CD4-positive, alpha-beta memory T cell (primary cell): ENCODE measurements at regions of chrX and their contacts with region 1.

Region 1: GRCh38 chrX:119753571-119754257 is 4.7 kb upstream of the SOWAHD start:
- DNase-seq: peak; percentile 75 to 87 (median 84)
- H3K4me3 ChIP-seq: no peak overlapping the region
- H3K4me3 Mint-ChIP-seq: peak overlapping the region in 7 of 8 donors; percentile 58 to 81 (median 76)
- H3K27ac ChIP-seq: peak overlapping the region; percentile 67
- H3K27ac Mint-ChIP-seq: peak overlapping the region; percentile 93 to 99 (median 96)
- H3K4me1 ChIP-seq: peaks cover 48% of the 10 kb centered on the region
- H3K4me1 Mint-ChIP-seq: peaks cover 22 to 49% (median 38%) of the 10 kb centered on the region in 4 donors
- H3K27me3 ChIP-seq: no peaks in the 10 kb centered on the region
- H3K27me3 Mint-ChIP-seq: no peaks in the 10 kb centered on the region

Region 2: DNA sequence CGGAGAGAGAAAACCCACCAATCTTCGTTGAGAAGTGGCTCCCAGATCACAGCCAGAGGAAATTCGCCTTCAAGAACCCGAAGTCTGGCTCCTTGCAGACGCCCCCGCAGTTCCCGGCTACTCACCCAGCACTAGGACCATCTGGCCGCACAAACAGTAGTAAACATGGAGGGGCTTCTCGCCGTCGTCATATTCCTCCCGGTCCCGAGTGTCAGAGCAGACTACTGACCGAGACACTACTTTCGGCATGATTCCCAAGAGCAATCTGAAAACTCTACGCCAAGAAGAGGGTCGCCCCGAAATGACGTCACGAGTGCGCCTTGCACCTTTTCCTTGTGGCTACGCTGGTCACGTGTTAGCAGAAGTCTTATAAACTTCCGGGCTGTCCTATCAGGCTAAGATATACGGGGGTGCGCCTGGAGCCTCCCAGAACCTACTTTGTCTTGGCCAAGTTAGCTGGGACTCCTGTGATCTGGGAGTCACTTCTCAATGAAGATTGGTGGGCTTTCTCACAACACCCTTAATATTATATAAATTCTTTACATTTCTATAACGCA is 188.5 kb before region 1 on chrX and contains the start of gene STEEP1:
- CTCF ChIA-PET with region 1: no interaction called
- POLR2A ChIA-PET with region 1: no interaction called
- intact Hi-C with region 1: loop called (anchors 1 kb)
- DNase-seq: peak; percentile 80 to 91 (median 84)
- H3K4me3 ChIP-seq: peak within 1 kb of the TSS; percentile 57 to 79
- H3K4me3 Mint-ChIP-seq: peak within 1 kb of the TSS; percentile 94 to 96 (median 96)
- H3K27ac ChIP-seq: peak within 1 kb of the TSS; percentile 74
- H3K27ac Mint-ChIP-seq: peak within 1 kb of the TSS; percentile 83 to 98 (median 93)
- H3K4me1 ChIP-seq: peaks cover 9% of the 10 kb centered on the region
- H3K4me1 Mint-ChIP-seq: peaks cover 15 to 22% (median 19%) of the 10 kb centered on the region in 4 donors
- H3K27me3 ChIP-seq: no peaks in the 10 kb centered on the region
- H3K27me3 Mint-ChIP-seq: no peaks in the 10 kb centered on the region
- total RNA-seq, gene STEEP1: 22.1 to 22.9 TPM

Region 3: GRCh38 chrX:119606280-119607015 is 147.3 kb before region 1 on chrX and contains the start of gene NKRF:
- CTCF ChIA-PET with region 1: interaction called, 5 read pairs
- POLR2A ChIA-PET with region 1: interaction called, 23 read pairs
- intact Hi-C with region 1: loop called (anchors 1 kb)
- DNase-seq: peak; percentile 87 to 94 (median 89)
- H3K4me3 ChIP-seq: peak within 1 kb of the TSS; percentile 73 to 84
- H3K4me3 Mint-ChIP-seq: peak within 1 kb of the TSS; percentile 91 to 97 (median 95)
- H3K27ac ChIP-seq: peak within 1 kb of the TSS; percentile 85
- H3K27ac Mint-ChIP-seq: peak within 1 kb of the TSS; percentile 93 to 99 (median 99)
- H3K4me1 ChIP-seq: peaks cover 26% of the 10 kb centered on the region
- H3K4me1 Mint-ChIP-seq: peaks cover 10 to 46% (median 28%) of the 10 kb centered on the region in 4 donors
- H3K27me3 ChIP-seq: no peaks in the 10 kb centered on the region
- H3K27me3 Mint-ChIP-seq: no peaks in the 10 kb centered on the region
- total RNA-seq, gene NKRF: 13.0 to 14.2 TPM

Region 4: DNA sequence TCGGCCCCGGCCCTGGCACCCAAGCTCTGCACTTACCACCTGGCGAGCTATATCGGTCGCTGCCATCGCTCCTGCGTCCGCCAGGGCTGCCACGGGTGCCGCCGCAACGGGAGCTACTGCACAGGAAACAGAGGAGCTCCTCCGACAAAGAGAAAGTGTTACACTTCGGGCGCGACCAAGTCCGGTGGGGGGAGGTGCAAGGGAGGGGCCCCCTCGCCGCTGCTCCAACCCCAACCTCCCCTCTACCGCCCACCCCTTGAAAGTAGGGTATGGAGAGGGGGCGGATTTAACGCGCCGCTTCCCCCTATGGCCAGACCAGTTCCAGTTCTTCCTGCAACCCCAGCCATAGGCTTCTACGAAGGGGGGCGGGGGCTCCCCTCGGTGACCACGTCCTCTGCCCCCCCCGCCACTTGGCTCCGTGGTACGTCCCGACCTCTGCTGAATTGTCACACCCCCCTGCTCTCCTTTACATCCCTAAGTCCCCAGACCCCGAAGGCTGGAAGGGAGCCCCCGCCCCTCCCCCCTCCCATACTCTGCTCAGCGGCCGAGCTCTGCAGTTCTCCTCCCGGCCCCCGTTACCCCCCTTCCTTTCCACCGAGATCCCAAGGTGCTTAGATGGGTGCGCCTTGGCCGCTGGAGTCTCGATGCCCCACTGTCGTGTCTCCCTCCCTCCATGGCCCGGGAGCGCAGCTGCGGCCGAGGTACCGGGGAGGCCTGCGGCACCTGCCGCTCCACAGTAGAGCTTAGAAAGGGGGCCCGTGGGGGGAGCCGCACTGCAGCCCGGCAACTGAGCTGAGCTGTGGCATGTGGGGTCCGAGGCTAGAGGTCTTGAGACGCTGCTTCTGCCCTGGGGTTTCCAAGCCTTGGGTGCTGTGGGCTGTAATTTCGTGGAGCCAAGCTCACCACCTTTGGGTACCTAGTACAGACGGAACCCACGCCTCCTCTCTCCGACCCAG is 60.4 kb before region 1 on chrX and contains the start of gene SEPTIN6:
- CTCF ChIA-PET with region 1: interaction called, 7 read pairs
- POLR2A ChIA-PET with region 1: interaction called, 26 read pairs
- intact Hi-C with region 1: loop called (anchors 2 kb)
- DNase-seq: peak; percentile 85 to 93 (median 93)
- H3K4me3 ChIP-seq: peak within 1 kb of the TSS; percentile 55 to 75
- H3K4me3 Mint-ChIP-seq: peak within 1 kb of the TSS; percentile 93 to 100 (median 98)
- H3K27ac ChIP-seq: peak within 1 kb of the TSS; percentile 89
- H3K27ac Mint-ChIP-seq: peak within 1 kb of the TSS; percentile 93 to 99 (median 98)
- H3K4me1 ChIP-seq: peaks cover 27% of the 10 kb centered on the region
- H3K4me1 Mint-ChIP-seq: peaks cover 9 to 38% (median 27%) of the 10 kb centered on the region in 4 donors
- H3K27me3 ChIP-seq: no peaks in the 10 kb centered on the region
- H3K27me3 Mint-ChIP-seq: no peaks in the 10 kb centered on the region
- total RNA-seq, gene SEPTIN6: 174 to 178 TPM

Region 5: DNA sequence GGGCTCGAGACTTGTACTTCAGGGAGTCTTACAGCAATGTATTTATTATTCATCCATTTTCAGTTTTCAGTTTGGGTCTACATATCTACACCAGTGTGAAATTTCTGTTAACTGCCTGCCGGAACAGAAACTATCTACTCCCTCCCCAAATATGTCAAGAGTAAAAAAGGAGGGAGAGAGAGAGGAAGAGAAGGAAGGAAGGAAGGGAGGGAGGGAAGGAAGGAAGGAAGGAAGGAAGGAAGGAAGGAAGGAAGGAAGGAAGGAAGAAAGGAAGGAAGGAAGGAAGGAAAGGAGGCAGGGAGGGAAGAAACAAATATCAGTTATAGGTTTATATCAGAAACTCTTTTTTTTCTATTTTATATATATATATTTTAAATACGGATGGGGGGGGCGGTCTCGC is 25.1 kb after region 1 on chrX:
- CTCF ChIA-PET with region 1: interaction called, 4 read pairs
- POLR2A ChIA-PET with region 1: interaction called, 3 read pairs
- intact Hi-C with region 1: loop called (anchors 2 kb)
- DNase-seq: no peak
- H3K4me3 ChIP-seq: no peak overlapping the region
- H3K4me3 Mint-ChIP-seq: no peak overlapping the region
- H3K27ac ChIP-seq: no peak overlapping the region
- H3K27ac Mint-ChIP-seq: peak overlapping the region in 3 of 7 donors; percentile 19 to 81 (median 79)
- H3K4me1 ChIP-seq: no peaks in the 10 kb centered on the region
- H3K4me1 Mint-ChIP-seq: peaks cover 0 to 13% (median 0%) of the 10 kb centered on the region in 4 donors
- H3K27me3 ChIP-seq: no peaks in the 10 kb centered on the region
- H3K27me3 Mint-ChIP-seq: no peaks in the 10 kb centered on the region

Region 6: GRCh38 chrX:119791438-119792231 is 37.9 kb after region 1 on chrX and contains the start of gene RPL39:
- CTCF ChIA-PET with region 1: interaction called, 25 read pairs
- POLR2A ChIA-PET with region 1: interaction called, 65 read pairs
- intact Hi-C with region 1: loop called (anchors 1 kb)
- DNase-seq: peak; percentile 78 to 89 (median 85)
- H3K4me3 ChIP-seq: peak within 1 kb of the TSS; percentile 70 to 83
- H3K4me3 Mint-ChIP-seq: peak within 1 kb of the TSS; percentile 91 to 96 (median 95)
- H3K27ac ChIP-seq: peak within 1 kb of the TSS; percentile 90
- H3K27ac Mint-ChIP-seq: peak within 1 kb of the TSS; percentile 96 to 99 (median 98)
- H3K4me1 ChIP-seq: peaks cover 40% of the 10 kb centered on the region
- H3K4me1 Mint-ChIP-seq: peaks cover 10 to 52% (median 22%) of the 10 kb centered on the region in 4 donors
- H3K27me3 ChIP-seq: no peaks in the 10 kb centered on the region
- H3K27me3 Mint-ChIP-seq: no peaks in the 10 kb centered on the region
- total RNA-seq, gene RPL39: 3,907 to 4,108 TPM

Region 7: DNA sequence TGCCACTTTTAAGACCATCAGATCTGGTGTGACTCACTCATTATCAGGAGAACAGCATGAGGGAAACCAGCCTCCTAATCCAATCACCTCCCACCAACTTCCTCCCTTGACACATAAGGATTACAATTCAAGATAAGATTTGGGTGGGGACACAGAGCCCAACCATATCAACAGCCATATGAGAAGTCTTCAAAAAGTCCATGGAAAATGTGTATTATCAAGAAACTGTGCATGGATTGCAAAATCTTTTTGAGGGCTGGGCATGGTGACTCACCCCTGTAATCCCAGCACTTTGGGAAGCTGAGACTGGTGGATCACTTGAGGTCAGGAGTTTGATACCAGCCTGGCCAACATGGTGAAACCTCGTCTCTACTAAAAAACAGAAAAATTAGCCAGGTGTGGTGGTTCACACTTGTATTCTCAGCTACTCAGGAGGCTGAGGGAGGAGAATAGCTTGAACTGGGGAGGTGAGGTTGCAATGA is 55.5 kb after region 1 on chrX:
- CTCF ChIA-PET with region 1: no interaction called
- POLR2A ChIA-PET with region 1: no interaction called
- intact Hi-C with region 1: no loop called
- DNase-seq: no peak
- H3K4me3 ChIP-seq: no peak overlapping the region
- H3K4me3 Mint-ChIP-seq: no peak overlapping the region
- H3K27ac ChIP-seq: no peak overlapping the region
- H3K27ac Mint-ChIP-seq: no peak overlapping the region
- H3K4me1 ChIP-seq: no peaks in the 10 kb centered on the region
- H3K4me1 Mint-ChIP-seq: no peaks in the 10 kb centered on the region
- H3K27me3 ChIP-seq: no peaks in the 10 kb centered on the region
- H3K27me3 Mint-ChIP-seq: no peaks in the 10 kb centered on the region

Region 8: GRCh38 chrX:119871599-119872395 is 118.1 kb after region 1 on chrX and contains the starts of genes NDUFA1 and RNF113A:
- CTCF ChIA-PET with region 1: no interaction called
- POLR2A ChIA-PET with region 1: interaction called, 18 read pairs
- intact Hi-C with region 1: no loop called
- DNase-seq: peak; percentile 86 to 91 (median 89)
- H3K4me3 ChIP-seq: peak within 1 kb of the TSS; percentile 78 to 89
- H3K4me3 Mint-ChIP-seq: peak within 1 kb of the TSS; percentile 93 to 100 (median 96)
- H3K27ac ChIP-seq: peak within 1 kb of the TSS; percentile 85
- H3K27ac Mint-ChIP-seq: peak within 1 kb of the TSS; percentile 98 to 100 (median 98)
- H3K4me1 ChIP-seq: peaks cover 15% of the 10 kb centered on the region
- H3K4me1 Mint-ChIP-seq: peaks cover 3 to 39% (median 17%) of the 10 kb centered on the region in 4 donors
- H3K27me3 ChIP-seq: no peaks in the 10 kb centered on the region
- H3K27me3 Mint-ChIP-seq: no peaks in the 10 kb centered on the region
- total RNA-seq, gene NDUFA1: 59.7 to 62.4 TPM
- total RNA-seq, gene RNF113A: 43.0 to 45.3 TPM